ENCODE measurements at regions of chr6 and their contacts with region 1.

Region 1: GRCh38 chr6:30821862-30822782 is 62.2 kb upstream of the DDR1 start:
- DNase-seq: no peak
- H3K4me3 ChIP-seq: no peak overlapping the region
- H3K27me3 ChIP-seq: no peaks in the 10 kb centered on the region
- CTCF ChIP-seq: peak; percentile 56

Region 2: GRCh38 chr6:30678964-30679726 is 143.0 kb before region 1 on chr6:
- CTCF ChIA-PET with region 1: interaction called, 14 read pairs
- POLR2A ChIA-PET with region 1: no interaction called
- DNase-seq: no peak
- H3K4me3 ChIP-seq: no peak overlapping the region; the same call in 1 of the 2 replicates
- H3K27me3 ChIP-seq: no peaks in the 10 kb centered on the region
- CTCF ChIP-seq: peak; percentile 97

Region 3: DNA sequence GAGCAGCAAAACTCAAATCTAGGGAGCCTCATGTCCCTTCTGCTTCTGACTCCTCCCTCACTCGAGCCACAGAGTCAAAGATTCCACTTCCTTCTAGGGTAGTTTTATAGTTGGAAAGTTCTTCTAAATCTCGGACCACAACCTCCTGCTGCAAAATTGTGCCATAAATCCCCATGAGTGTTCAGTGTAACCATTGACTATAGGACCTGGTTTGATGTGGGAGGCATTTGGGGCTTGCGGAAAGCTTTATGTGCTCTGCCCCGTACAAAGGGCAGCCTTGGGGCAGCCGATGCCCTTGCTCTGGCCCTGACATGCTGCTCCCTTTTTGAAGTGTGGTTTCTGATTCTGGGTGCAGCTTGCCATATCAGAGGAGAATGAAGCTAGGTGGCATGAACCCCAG is 34.2 kb before region 1 on chr6:
- CTCF ChIA-PET with region 1: interaction called, 14 read pairs
- POLR2A ChIA-PET with region 1: no interaction called
- DNase-seq: no peak
- H3K4me3 ChIP-seq: no peak overlapping the region
- H3K27me3 ChIP-seq: no peaks in the 10 kb centered on the region
- CTCF ChIP-seq: no peak

Region 4: DNA sequence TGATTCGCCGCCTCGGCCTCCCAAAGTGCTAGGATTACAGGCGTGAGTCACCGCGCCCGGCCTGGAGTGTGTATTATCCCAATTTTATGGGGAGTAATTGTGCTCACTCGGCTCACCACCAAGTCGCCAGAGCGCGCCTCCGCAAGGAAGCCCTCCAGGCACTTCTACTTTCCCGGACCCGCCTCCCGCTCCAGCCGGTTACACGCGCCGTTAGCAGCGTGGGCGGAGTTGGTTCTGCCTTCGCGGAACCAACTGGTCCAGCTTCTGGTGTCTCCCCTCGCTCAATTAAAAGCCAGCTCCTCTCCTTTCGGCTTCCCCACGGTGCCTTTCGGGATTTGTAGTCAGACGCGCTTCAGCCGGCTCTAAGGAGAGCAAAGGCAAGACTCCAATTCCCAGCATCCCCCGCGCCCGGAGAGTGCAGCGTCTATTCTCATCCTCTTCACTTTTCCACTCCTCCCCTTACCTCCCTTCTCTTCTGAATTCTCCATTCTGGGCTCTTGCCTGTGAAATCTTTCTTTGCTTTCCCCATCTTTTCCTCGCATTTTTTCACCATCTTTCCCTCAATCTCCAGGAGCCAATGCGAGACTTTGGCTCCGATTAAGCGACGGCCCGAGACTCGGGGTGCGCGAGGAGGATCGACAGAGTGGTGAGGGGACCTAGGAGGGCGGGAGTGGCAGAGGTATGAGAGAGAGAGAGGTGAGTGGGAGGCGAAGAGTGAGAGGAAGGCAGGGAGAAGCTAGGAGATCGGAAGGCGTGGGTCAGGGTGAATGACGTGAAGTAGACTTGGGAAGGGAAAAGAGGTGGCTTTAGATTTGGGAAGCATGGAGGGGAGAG is 85.9 kb after region 1 on chr6 and contains the start of gene GTF2H4:
- CTCF ChIA-PET with region 1: interaction called, 77 read pairs
- POLR2A ChIA-PET with region 1: interaction called, 10 read pairs
- DNase-seq: peak; percentile 94
- H3K4me3 ChIP-seq: peak within 1 kb of the TSS; percentile 77
- H3K27me3 ChIP-seq: no peaks in the 10 kb centered on the region
- CTCF ChIP-seq: no peak
- polyA plus RNA-seq, gene GTF2H4: 24.9 and 28.2 TPM in 2 replicates